Activated CD8-positive, alpha-beta T cell treated with anti-CD3 and anti-CD28 coated beads for 36 hours (primary cell): ENCODE measurements at regions of chr17 and their contacts with region 1.

Region 1: DNA sequence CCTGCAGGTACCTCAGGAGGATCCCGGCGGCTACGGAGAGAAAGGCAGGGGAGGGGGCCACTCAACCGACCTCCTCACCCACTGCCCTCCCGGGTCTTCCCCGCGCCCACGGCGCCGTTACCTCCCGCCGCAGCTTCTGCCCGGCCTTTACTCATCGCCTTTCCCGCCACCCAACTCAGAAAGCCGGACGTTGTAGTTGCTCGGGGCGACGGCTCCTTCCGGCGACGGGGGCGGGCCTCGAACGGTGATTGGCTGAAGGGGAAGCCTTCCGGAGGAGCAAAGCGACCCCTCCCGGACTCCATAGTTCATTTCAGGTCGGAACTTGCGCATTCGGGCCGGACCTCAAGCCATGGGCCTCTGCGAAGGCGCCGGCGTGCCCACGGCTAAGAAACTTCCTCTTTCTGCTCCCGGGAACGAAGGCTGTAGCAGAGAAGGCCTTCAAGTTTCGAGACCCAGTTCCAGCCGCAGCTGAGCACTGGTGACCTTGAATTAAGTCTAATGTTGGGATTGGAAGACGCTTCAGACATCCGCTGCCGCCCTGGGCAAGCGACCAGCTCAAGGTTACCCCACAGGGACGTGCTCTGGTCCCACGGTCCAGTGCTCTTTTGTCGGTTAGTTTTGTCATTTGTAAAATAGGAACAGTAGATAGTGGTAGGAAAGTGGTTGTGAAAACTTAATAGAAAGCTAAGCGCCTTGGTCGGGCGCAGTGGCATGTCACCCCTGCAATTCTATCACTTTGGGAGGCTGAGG is at the start of gene PSMC3IP:
- DNase-seq: peak; percentile 98
- ATAC-seq: peak; percentile 95
- H3K4me3 Mint-ChIP-seq: peak within 1 kb of the TSS; percentile 88
- H3K27ac Mint-ChIP-seq: peak within 1 kb of the TSS; percentile 97
- H3K4me1 Mint-ChIP-seq: peaks cover 35% of the 10 kb centered on the region
- H3K27me3 Mint-ChIP-seq: no peaks in the 10 kb centered on the region
- CTCF ChIP-seq: no peak
- total RNA-seq, gene PSMC3IP: 18.1 to 21.4 TPM

Region 2: GRCh38 chr17:42517516-42517915 is 60.2 kb before region 1 on chr17:
- CTCF ChIA-PET with region 1: interaction called, 12 read pairs
- POLR2A ChIA-PET with region 1: no interaction called
- intact Hi-C with region 1: no loop called
- DNase-seq: peak; percentile 90
- ATAC-seq: peak; percentile 84
- H3K4me3 Mint-ChIP-seq: no peak overlapping the region
- H3K27ac Mint-ChIP-seq: no peak overlapping the region
- H3K4me1 Mint-ChIP-seq: no peaks in the 10 kb centered on the region
- H3K27me3 Mint-ChIP-seq: no peaks in the 10 kb centered on the region
- CTCF ChIP-seq: peak; percentile 97

Region 3: DNA sequence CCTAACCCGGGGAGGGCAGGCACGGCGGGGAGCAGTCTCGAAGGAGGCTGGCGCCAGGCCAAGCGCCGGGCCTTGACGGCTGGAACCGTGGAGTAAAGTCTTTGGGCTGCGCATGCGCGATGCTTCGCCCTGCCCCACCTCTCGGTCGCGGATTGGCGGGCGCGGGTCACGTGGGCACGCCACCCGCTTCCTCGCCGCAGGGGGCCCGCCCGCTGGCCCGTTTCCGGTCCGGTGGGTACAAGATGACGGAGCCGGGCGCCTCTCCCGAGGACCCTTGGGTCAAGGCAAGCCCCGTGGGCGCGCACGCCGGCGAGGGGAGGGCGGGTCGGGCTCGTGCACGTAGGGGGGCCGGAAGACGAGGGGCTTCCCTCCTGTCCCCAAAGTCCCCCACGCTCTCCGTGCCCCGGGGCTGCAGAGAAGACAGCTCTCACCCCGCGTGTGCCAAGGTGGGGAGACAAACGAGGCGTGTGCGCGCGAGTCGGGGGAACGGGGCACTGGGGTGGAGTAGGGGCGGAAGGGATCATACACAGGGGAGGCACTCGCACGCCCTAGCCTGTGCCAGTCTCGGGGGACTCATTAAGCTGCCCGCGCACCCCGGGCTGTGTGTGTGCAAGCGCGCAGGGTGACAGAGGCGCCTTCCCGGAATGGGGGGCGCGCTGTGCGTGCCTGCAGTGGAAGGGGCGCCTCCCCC is 10.7 kb before region 1 on chr17 and contains the start of gene MLX:
- CTCF ChIA-PET with region 1: interaction called, 70 read pairs
- POLR2A ChIA-PET with region 1: interaction called, 61 read pairs
- intact Hi-C with region 1: no loop called
- DNase-seq: peak; percentile 93
- ATAC-seq: peak; percentile 72
- H3K4me3 Mint-ChIP-seq: peak within 1 kb of the TSS; percentile 96
- H3K27ac Mint-ChIP-seq: peak within 1 kb of the TSS; percentile 93
- H3K4me1 Mint-ChIP-seq: peaks cover 52% of the 10 kb centered on the region
- H3K27me3 Mint-ChIP-seq: no peaks in the 10 kb centered on the region
- CTCF ChIP-seq: no peak
- total RNA-seq, gene MLX: 42.7 to 45.9 TPM

Region 4: GRCh38 chr17:42609182-42609813 is 31.6 kb after region 1 on chr17 and contains the starts of genes RETREG3 and TUBG1:
- CTCF ChIA-PET with region 1: interaction called, 33 read pairs
- POLR2A ChIA-PET with region 1: interaction called, 12 read pairs
- intact Hi-C with region 1: no loop called
- DNase-seq: peak; percentile 99
- ATAC-seq: peak; percentile 95
- H3K4me3 Mint-ChIP-seq: peak within 1 kb of the TSS; percentile 99
- H3K27ac Mint-ChIP-seq: peak within 1 kb of the TSS; percentile 97
- H3K4me1 Mint-ChIP-seq: peaks cover 32% of the 10 kb centered on the region
- H3K27me3 Mint-ChIP-seq: no peaks in the 10 kb centered on the region
- CTCF ChIP-seq: no peak
- total RNA-seq, gene RETREG3: 25.0 to 28.2 TPM
- total RNA-seq, gene TUBG1: 79.5 to 82.4 TPM

Region 5: GRCh38 chr17:42677008-42677857 is 99.5 kb after region 1 on chr17:
- CTCF ChIA-PET with region 1: interaction called, 39 read pairs
- POLR2A ChIA-PET with region 1: interaction called, 7 read pairs
- intact Hi-C with region 1: loop called (anchors 5 kb)
- DNase-seq: peak; percentile 100
- ATAC-seq: peak; percentile 83
- H3K4me3 Mint-ChIP-seq: peak overlapping the region; percentile 71
- H3K27ac Mint-ChIP-seq: peak overlapping the region; percentile 52
- H3K4me1 Mint-ChIP-seq: peaks cover 45% of the 10 kb centered on the region
- H3K27me3 Mint-ChIP-seq: peaks cover 42% of the 10 kb centered on the region
- CTCF ChIP-seq: no peak

Region 6: DNA sequence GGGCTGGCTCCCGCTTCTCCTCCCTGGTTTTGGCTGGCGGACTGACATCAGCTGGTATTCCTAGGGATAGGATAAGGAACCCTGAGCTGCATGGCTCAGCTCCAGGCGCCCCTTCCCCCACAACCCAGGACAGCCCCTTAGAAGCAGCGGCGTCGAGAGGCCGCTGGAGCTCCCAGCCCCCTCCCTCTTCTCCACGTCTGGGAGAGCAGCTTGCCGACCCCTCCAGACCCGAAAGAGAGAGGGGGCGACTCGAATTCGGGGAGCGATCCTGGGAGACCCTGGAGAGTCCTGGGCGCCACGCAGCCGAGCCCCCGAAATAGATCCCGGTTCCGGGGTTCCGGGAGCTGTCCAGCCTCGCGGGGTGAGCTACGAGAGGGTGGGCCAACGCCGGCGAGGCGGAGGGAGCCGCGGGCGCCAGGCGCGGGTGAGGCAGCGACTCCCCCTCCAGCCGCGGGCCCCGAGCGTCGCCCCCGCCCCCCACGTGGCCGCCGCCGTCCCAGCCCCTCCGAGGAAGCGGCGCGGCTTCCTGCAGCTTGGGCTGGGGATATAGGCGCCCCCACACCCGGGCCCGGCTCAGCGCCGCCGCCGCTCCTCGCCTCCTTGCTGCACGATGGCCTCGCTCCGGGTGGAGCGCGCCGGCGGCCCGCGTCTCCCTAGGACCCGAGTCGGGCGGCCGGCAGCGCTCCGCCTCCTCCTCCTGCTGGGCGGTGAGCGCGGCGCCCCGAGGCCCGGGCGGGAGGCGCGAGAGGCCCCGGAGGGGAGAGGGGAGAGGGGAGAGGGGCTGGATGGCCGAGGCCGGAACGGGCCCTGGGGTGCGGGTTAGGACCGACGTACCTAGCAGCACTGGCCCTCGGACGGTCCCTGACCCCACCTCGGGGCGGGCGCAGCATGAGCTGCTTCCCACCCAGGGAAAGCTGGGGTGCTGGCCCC is 183.2 kb after region 1 on chr17 and contains the start of gene RAMP2:
- CTCF ChIA-PET with region 1: interaction called, 34 read pairs
- POLR2A ChIA-PET with region 1: interaction called, 4 read pairs
- intact Hi-C with region 1: loop called (anchors 2 kb)
- DNase-seq: no peak
- ATAC-seq: peak; percentile 43
- H3K4me3 Mint-ChIP-seq: no peak within 1 kb of the TSS
- H3K27ac Mint-ChIP-seq: no peak within 1 kb of the TSS
- H3K4me1 Mint-ChIP-seq: peaks cover 4% of the 10 kb centered on the region
- H3K27me3 Mint-ChIP-seq: peaks cover 55% of the 10 kb centered on the region
- CTCF ChIP-seq: no peak
- total RNA-seq, gene RAMP2: not detected

Region 7: DNA sequence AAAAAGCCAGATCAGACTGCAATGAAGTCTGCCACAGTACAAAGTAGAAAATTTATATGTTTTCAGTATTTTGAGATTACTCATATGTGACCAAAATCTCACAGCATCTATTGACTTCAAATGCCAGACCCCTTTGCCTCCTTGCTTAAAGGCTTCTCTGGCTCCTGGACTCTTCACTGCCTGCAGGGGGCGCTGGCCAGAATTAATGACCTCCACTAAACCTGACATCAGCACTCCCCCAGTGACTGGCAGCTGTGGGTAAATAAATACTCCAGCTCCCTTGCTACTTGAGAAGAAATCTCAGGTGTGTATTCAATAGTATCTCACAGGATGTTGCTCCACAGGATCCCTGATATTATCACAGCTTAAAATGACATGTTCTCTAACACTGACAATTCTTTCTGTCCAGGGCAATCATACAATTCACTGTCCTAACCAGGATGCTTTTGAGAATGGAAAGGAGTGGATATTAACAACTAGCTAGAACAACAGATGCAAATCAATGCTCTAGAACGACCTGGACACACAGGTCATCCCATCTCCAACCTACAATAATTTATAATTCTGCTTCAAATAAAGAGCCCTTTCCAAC is 242.3 kb after region 1 on chr17:
- CTCF ChIA-PET with region 1: interaction called, 13 read pairs
- POLR2A ChIA-PET with region 1: no interaction called
- intact Hi-C with region 1: no loop called
- DNase-seq: peak; percentile 90
- ATAC-seq: peak; percentile 50
- H3K4me3 Mint-ChIP-seq: no peak overlapping the region
- H3K27ac Mint-ChIP-seq: peak overlapping the region; percentile 41
- H3K4me1 Mint-ChIP-seq: peaks cover 34% of the 10 kb centered on the region
- H3K27me3 Mint-ChIP-seq: no peaks in the 10 kb centered on the region
- CTCF ChIP-seq: peak; percentile 82